ENCODE measurements at regions of chr5 and their contacts with region 1.

Region 1: DNA sequence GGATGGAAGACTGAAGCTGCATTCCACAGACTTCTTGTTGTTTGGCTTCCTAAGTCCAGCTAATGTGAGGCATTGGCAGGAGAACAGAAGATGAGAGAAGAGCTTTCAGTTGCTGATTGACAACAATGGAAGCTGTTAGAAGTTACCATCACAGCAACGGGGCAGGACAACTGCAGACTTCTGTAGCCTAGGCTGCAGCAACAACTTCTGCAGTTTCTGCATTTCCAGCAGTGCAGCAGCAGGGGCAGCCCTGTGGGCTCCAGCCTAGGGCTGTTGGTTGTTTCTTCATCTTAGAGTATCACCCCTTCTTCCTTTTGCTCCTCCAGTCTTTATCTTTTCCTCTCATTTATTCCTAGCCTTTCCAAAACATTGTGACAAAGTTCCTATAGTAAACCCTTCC is 528.8 kb upstream of the PTGER4 start:
- DNase-seq: no peak
- H3K4me3 ChIP-seq: no peak overlapping the region
- H3K27ac ChIP-seq: no peak overlapping the region
- H3K4me1 ChIP-seq: no peaks in the 10 kb centered on the region
- H3K27me3 ChIP-seq: no peaks in the 10 kb centered on the region
- CTCF ChIP-seq: no peak
- EP300 ChIP-seq: no peak
- POLR2A ChIP-seq: no peak

Region 2: GRCh38 chr5:40171971-40172370 is 21.1 kb after region 1 on chr5:
- in situ Hi-C with region 1: no loop called
- intact Hi-C with region 1: loop called (anchors 1 kb)
- DNase-seq: no peak
- H3K4me3 ChIP-seq: no peak overlapping the region
- H3K27ac ChIP-seq: no peak overlapping the region
- H3K4me1 ChIP-seq: no peaks in the 10 kb centered on the region
- H3K27me3 ChIP-seq: no peaks in the 10 kb centered on the region
- CTCF ChIP-seq: no peak
- EP300 ChIP-seq: no peak
- POLR2A ChIP-seq: no peak

Region 3: GRCh38 chr5:40198736-40199135 is 47.8 kb after region 1 on chr5:
- in situ Hi-C with region 1: no loop called
- intact Hi-C with region 1: loop called (anchors 2 kb)
- DNase-seq: no peak
- H3K4me3 ChIP-seq: no peak overlapping the region
- H3K27ac ChIP-seq: no peak overlapping the region
- H3K4me1 ChIP-seq: no peaks in the 10 kb centered on the region
- H3K27me3 ChIP-seq: no peaks in the 10 kb centered on the region
- CTCF ChIP-seq: no peak
- EP300 ChIP-seq: no peak
- POLR2A ChIP-seq: no peak

Region 4: DNA sequence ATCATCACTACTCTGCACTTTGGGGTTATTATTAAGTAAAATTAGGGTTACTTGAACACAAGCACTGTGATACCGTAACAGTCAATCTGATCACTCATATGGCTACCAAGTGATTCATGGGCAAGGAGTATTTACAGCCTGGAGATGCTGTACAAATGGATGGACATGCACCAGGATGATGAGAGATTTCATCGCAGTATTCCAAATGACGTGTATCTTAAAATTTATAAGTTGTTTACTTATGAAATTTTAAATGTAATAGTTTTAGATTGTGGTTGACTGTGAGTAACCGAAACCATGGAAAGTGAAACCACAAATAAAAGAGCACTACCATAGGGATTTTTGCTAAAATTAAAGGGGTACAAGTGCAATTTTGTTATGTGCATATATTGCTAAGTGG is 66.7 kb after region 1 on chr5:
- in situ Hi-C with region 1: no loop called
- intact Hi-C with region 1: no loop called
- DNase-seq: no peak
- H3K4me3 ChIP-seq: no peak overlapping the region
- H3K27ac ChIP-seq: no peak overlapping the region
- H3K4me1 ChIP-seq: no peaks in the 10 kb centered on the region
- H3K27me3 ChIP-seq: no peaks in the 10 kb centered on the region
- CTCF ChIP-seq: no peak
- EP300 ChIP-seq: no peak
- POLR2A ChIP-seq: no peak